ENCODE measurements at regions of chr16 and their contacts with region 1.

Region 1: DNA sequence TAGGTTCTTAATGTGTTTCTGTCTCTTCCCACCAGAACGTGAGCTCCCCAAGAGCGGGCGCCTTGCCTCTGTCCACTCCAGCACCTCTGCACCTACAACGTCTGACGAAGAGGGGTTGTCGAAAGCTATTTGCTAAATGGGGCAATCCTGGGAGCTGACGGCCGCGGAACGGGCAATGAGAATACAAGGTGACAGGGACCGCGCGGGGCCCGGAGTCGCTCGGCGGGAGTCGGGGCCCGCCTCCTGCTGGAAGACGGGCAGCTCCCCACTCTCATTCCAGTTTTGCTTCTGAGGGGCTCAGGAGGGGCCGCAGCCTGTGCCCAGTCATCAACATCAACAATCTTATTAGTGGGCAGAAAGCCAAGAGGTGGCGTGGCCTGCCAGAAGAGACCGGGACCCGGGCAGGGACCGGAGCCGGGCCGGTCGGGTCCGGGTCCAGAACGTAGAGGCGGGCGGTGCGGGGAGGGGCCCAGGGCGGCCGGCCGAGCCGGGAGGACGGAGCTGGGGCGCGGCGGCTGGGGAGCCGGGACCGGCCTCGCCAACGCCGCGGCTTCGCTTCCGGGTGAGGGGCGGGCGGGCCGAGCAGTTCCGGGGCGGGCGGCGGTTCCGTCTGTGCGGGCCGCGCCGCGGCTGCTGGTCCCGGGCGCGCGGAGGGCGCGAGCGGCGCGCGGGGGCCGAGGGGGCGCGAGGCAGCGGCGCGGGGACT is at the start of gene MOSMO:
- DNase-seq: peak; percentile 64
- H3K4me3 Mint-ChIP-seq: peak within 1 kb of the TSS; percentile 85
- H3K27ac Mint-ChIP-seq: peak within 1 kb of the TSS; percentile 73
- H3K4me1 Mint-ChIP-seq: peaks cover 40% of the 10 kb centered on the region
- H3K27me3 Mint-ChIP-seq: no peaks in the 10 kb centered on the region
- total RNA-seq, gene MOSMO: 6.5 to 6.7 TPM

Region 2: DNA sequence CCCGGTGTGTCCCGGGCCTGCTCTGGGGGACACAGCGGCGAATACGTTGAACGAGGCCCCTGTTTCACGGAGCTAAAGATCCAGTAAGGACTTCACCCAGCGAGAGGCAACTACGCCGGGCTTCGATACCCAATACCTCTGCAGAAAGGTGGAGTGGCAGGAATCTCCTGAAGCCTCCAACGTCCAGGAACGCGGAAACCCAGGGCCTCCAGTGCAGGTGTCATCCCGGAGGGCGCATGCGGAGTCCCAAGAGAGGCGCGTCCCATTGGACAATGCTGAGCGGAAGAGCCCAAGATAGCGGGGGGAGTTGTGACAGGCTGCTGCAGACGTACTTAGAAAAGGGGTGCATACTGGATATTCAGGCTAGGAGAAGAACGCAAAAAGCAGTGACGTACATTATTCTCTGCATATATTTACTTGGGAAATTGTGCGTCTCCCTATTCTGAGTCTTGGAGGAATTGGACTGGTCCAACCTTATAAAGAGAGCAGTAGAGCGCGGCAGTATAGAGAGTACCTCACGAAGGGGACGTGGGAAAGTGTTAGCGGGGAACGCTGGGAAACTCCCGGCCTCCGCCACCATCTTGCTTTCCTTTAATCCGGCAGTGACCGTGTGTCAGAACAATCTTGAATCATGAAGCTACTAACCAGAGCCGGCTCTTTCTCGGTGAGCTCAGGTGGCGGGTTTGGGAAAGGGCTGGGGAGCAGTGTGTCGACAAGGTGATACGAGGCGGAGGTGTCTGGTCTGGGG is 54.7 kb before region 1 on chr16 and contains the start of gene UQCRC2:
- CTCF ChIA-PET with region 1: no interaction called
- intact Hi-C with region 1: loop called (anchors 2 kb)
- DNase-seq: peak; percentile 93
- H3K4me3 Mint-ChIP-seq: peak within 1 kb of the TSS; percentile 95
- H3K27ac Mint-ChIP-seq: peak within 1 kb of the TSS; percentile 97
- H3K4me1 Mint-ChIP-seq: peaks cover 56% of the 10 kb centered on the region
- H3K27me3 Mint-ChIP-seq: no peaks in the 10 kb centered on the region
- total RNA-seq, gene UQCRC2: 356 to 378 TPM

Region 3: GRCh38 chr16:22023505-22023904 is 15.8 kb after region 1 on chr16:
- CTCF ChIA-PET with region 1: no interaction called
- intact Hi-C with region 1: no loop called
- DNase-seq: no peak
- H3K4me3 Mint-ChIP-seq: no peak overlapping the region
- H3K27ac Mint-ChIP-seq: no peak overlapping the region
- H3K4me1 Mint-ChIP-seq: peaks cover 36% of the 10 kb centered on the region
- H3K27me3 Mint-ChIP-seq: no peaks in the 10 kb centered on the region

Region 4: DNA sequence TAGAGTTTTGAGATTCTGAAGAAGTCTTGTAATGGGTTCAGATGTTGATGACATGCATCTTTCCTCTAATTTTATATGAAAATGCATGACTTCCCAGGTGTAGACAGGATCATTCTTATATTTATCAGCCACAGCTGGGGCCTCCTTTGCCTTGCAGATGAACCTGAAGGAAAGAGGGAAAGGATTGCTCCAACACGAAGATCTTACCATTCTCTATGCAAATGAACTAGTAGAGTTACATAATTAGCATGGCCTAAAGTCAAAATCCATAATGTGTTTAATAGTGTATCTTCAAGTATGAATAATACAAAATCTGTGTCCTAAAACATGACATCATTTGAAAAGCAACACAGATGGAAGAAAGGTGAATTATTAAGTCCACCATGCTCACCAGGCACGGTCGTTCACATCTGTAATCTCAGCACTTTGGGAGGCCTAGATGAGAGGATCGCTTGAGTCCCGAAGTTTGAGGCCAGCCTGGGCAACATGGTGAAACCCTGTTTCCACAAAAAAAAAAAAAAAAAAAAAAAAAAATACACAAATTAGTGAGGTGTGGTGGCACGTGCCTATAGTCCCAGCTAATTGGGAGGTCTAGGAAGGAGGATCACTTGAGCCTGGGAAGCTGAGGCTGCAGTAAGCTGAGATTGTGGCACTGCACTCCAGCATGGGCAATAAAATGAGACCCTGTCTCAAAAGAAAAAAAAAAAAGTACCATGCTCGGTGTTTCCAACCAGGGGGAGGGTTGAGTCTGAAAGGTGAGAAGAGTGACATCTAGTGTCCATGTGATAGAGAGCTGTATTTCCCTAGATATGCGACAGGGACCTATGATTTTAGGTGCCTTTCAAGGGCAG is 91.0 kb after region 1 on chr16:
- CTCF ChIA-PET with region 1: interaction called, 12 read pairs
- intact Hi-C with region 1: no loop called
- DNase-seq: no peak
- H3K4me3 Mint-ChIP-seq: peak overlapping the region; percentile 28
- H3K27ac Mint-ChIP-seq: no peak overlapping the region
- H3K4me1 Mint-ChIP-seq: no peaks in the 10 kb centered on the region
- H3K27me3 Mint-ChIP-seq: peaks cover 5% of the 10 kb centered on the region

Region 5: DNA sequence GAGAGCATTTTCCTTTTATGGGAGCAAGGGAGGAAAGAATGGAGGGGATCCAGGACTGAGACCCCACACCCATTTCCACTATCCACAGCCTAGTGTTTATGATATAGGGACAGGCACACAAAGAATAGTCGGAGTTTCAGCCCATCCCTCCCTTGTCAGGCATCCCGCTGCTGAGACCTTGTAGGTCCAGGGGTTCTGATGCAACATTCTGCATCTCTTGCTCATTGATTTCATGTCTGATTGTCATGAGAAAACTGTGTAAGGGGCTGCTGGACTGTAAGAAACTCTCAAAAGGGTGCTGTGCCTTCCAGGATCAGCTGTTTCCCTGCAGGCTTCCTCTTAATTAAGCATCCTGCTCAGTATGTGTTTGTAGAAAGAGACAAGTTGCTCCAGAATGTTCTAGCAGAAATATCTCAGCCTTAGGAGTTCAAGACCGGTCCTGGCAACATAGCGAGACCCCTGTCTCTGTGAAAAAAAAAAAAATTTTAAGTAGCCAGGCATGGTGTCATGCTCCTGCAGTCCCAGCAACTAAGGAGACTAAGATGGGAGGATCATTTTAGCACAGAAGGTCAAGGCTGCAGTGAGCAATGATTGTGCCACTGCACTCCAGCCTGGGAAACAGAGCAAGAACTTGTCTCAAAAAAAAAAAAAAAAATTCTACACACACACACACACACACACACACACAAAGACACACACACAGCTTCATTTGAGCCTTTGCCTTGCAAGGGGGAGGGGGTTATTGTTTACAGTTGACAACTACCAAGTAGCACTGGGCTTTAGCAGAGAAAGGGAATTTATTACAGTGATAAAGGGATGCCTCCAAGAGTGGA is 284.4 kb after region 1 on chr16:
- CTCF ChIA-PET with region 1: no interaction called
- intact Hi-C with region 1: no loop called
- DNase-seq: no peak
- H3K4me3 Mint-ChIP-seq: no peak overlapping the region
- H3K27ac Mint-ChIP-seq: no peak overlapping the region
- H3K4me1 Mint-ChIP-seq: peaks cover 5% of the 10 kb centered on the region
- H3K27me3 Mint-ChIP-seq: no peaks in the 10 kb centered on the region